Activated naive CD4-positive, alpha-beta T cell treated with anti-CD3 and anti-CD28 coated beads for 36 hours (primary cell): ENCODE measurements at regions of chr20 and their contacts with region 1.

Region 1: DNA sequence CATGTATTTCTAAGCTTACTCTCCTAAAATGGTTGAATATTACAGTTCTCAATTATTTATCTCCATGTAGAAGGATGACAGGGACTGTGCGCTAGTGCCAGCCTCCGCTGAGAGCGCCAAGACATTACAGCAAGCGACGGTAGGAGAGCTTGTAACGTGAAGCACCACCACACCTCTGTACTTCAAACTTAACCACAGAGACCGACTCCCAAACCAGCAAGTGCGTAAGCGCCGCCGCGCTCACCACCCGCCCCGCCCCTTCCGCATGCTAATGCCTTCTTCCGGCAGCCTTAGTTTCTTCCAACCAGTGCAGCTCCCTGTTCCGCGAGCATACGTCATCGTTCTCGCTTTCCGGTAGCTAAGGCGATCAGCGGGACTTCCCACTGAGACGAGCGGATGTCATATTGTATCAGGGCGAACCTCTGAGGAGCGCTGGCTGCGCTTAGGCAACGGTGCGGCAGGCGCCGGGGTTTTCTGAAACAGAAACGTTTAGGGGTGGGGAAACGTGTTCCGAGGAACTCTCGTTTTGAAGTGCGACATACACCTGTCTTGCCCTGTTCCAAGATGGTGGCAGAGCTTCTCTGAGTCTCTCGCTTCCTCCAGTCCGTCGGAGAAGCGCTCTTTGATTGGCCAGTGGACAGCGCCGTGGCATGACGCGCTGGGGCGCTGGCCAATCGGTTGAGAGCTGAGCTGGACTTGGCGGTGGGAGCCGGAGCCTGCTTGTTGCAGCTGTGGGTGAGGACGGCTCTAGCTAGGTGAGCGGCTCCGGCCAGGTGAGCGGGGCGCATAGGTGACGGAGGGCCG is at the start of gene SEC23B:
- DNase-seq: peak; percentile 99
- H3K4me3 Mint-ChIP-seq: peak within 1 kb of the TSS; percentile 100
- H3K27ac Mint-ChIP-seq: peak within 1 kb of the TSS; percentile 100
- H3K4me1 Mint-ChIP-seq: peaks cover 45% of the 10 kb centered on the region
- H3K27me3 Mint-ChIP-seq: no peaks in the 10 kb centered on the region
- total RNA-seq, gene SEC23B: 66.9 to 69.2 TPM

Region 2: GRCh38 chr20:18137412-18138265 is 369.8 kb before region 1 on chr20 and contains the starts of genes KAT14 and PET117:
- CTCF ChIA-PET with region 1: no interaction called
- intact Hi-C with region 1: loop called (anchors 1 kb)
- DNase-seq: peak; percentile 91
- H3K4me3 Mint-ChIP-seq: peak within 1 kb of the TSS; percentile 75
- H3K27ac Mint-ChIP-seq: peak within 1 kb of the TSS; percentile 77
- H3K4me1 Mint-ChIP-seq: peaks cover 30% of the 10 kb centered on the region
- H3K27me3 Mint-ChIP-seq: no peaks in the 10 kb centered on the region
- total RNA-seq, gene KAT14: 10.3 to 12.9 TPM
- total RNA-seq, gene PET117: 16.7 to 17.9 TPM

Region 3: GRCh38 chr20:18496740-18497592 is 10.5 kb before region 1 on chr20 and contains the start of gene RBBP9:
- CTCF ChIA-PET with region 1: interaction called, 15 read pairs
- intact Hi-C with region 1: loop called (anchors 1 kb)
- DNase-seq: peak; percentile 88
- H3K4me3 Mint-ChIP-seq: peak within 1 kb of the TSS; percentile 91
- H3K27ac Mint-ChIP-seq: peak within 1 kb of the TSS; percentile 84
- H3K4me1 Mint-ChIP-seq: peaks cover 11% of the 10 kb centered on the region
- H3K27me3 Mint-ChIP-seq: no peaks in the 10 kb centered on the region
- total RNA-seq, gene RBBP9: 17.3 to 18.1 TPM

Region 4: GRCh38 chr20:18587665-18588573 is 80.5 kb after region 1 on chr20 and contains the start of gene DTD1:
- CTCF ChIA-PET with region 1: no interaction called
- intact Hi-C with region 1: loop called (anchors 1 kb)
- DNase-seq: peak; percentile 89
- H3K4me3 Mint-ChIP-seq: peak within 1 kb of the TSS; percentile 87
- H3K27ac Mint-ChIP-seq: peak within 1 kb of the TSS; percentile 59
- H3K4me1 Mint-ChIP-seq: peaks cover 23% of the 10 kb centered on the region
- H3K27me3 Mint-ChIP-seq: no peaks in the 10 kb centered on the region
- total RNA-seq, gene DTD1: 46.4 to 47.1 TPM

Region 5: GRCh38 chr20:20017001-20017843 is 1509.8 kb after region 1 on chr20 and contains the start of gene NAA20:
- CTCF ChIA-PET with region 1: no interaction called
- intact Hi-C with region 1: loop called (anchors 1 kb)
- DNase-seq: peak; percentile 93
- H3K4me3 Mint-ChIP-seq: peak within 1 kb of the TSS; percentile 88
- H3K27ac Mint-ChIP-seq: peak within 1 kb of the TSS; percentile 90
- H3K4me1 Mint-ChIP-seq: peaks cover 54% of the 10 kb centered on the region
- H3K27me3 Mint-ChIP-seq: no peaks in the 10 kb centered on the region
- total RNA-seq, gene NAA20: 59.5 to 65.5 TPM